ENCODE measurements at regions of chr4 and their contacts with region 1.

Region 1: GRCh38 chr4:157220371-157220881 is at the start of gene GRIA2:
- DNase-seq: peak; percentile 54
- ATAC-seq: peak; percentile 94
- H3K4me3 ChIP-seq: peak within 1 kb of the TSS; percentile 37
- H3K27ac ChIP-seq: no peak within 1 kb of the TSS
- H3K4me1 ChIP-seq: peaks cover 4% of the 10 kb centered on the region; the same call in 1 of the 2 replicates
- H3K27me3 ChIP-seq: peaks cover 33% of the 10 kb centered on the region
- CTCF ChIP-seq: no peak
- POLR2A ChIP-seq: no peak
- RAD21 ChIP-seq: no peak
- total RNA-seq, gene GRIA2: not detected in 2 replicates

Region 2: DNA sequence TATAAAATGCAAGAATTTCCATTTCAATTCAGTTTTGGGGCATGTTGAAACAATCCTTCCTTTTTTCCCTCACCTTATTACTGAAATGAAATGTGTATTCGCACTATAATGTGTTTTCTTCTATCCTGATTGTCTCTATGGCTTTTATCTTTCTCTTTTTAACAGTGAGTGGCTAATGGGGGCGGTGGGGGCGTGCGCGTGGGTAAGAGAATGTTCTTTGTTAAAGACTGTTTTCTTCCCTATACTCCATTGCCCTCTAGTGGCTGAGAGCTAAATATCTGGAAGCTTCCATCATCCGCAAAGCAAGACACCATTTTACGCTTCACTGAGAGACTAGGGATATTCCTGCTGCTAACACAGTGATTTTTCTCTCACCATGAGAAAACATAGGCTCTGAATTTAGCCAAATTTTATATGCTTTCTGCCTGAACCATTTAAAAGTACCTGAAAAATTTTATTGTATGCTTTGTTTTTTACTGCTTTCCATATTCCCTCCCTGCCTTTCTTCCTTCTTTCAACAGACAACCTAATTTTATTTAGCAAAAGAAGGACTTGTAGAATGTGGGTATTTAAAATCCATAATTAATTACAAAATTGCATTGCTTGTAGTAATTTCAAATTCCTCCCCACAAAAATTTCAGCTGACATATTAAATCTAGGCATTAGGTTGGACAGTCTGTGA is 758.4 kb after region 1 on chr4:
- CTCF ChIA-PET with region 1: interaction called, 3 read pairs
- POLR2A ChIA-PET with region 1: no interaction called
- dilution Hi-C with region 1: no loop called
- in situ Hi-C with region 1: no loop called
- intact Hi-C with region 1: loop called (anchors 1 kb)
- DNase-seq: peak; percentile 64
- ATAC-seq: peak; percentile 95
- H3K4me3 ChIP-seq: no peak overlapping the region; the same call in 1 of the 2 replicates
- H3K27ac ChIP-seq: no peak overlapping the region
- H3K4me1 ChIP-seq: no peaks in the 10 kb centered on the region
- H3K27me3 ChIP-seq: no peaks in the 10 kb centered on the region; the same call in 1 of the 2 replicates
- CTCF ChIP-seq: peak; percentile 78
- POLR2A ChIP-seq: no peak
- RAD21 ChIP-seq: peak; percentile 81

Region 3: GRCh38 chr4:158172261-158173258 is 952.1 kb after region 1 on chr4 and contains the start of gene GASK1B:
- CTCF ChIA-PET with region 1: no interaction called
- POLR2A ChIA-PET with region 1: no interaction called
- dilution Hi-C with region 1: no loop called
- in situ Hi-C with region 1: loop called (anchors 25 kb)
- intact Hi-C with region 1: loop called (anchors 5 kb)
- DNase-seq: peak; percentile 64
- ATAC-seq: peak; percentile 81
- H3K4me3 ChIP-seq: peak within 1 kb of the TSS; percentile 30
- H3K27ac ChIP-seq: peak within 1 kb of the TSS; percentile 71; the same call in 1 of the 2 replicates
- H3K4me1 ChIP-seq: peaks cover 17% of the 10 kb centered on the region
- H3K27me3 ChIP-seq: no peaks in the 10 kb centered on the region
- CTCF ChIP-seq: peak; percentile 81
- POLR2A ChIP-seq: no peak
- RAD21 ChIP-seq: peak; percentile 83
- total RNA-seq, gene GASK1B: 4.1 and 6.7 TPM in 2 replicates

Region 4: DNA sequence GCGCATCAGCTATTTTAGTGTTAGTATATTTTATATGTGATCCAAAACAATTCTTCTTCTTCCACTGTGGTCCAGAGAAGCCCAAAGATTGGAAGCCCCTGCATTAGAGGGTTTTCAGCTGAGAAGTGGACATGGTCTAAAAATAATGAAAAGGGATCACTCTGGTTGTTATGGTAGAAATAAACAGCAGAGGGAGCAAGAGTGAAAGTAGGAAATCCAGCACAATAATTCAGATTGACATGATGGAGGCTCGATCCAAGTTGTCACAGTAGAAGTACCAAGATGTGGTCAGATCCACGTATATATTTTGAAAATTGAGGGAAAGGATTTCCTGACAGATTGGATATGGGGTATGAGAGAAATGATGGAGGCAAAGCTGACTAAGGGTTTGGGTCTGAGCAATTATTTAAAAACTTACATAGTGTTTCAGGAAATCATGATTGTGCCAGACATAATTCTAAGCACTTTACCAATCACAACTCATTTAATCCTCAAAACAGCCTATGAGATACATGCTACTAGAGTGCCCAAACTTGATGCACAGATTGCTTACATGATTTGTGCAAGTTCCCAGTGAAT is 972.8 kb after region 1 on chr4:
- CTCF ChIA-PET with region 1: no interaction called
- POLR2A ChIA-PET with region 1: no interaction called
- dilution Hi-C with region 1: no loop called
- in situ Hi-C with region 1: loop called (anchors 25 kb)
- intact Hi-C with region 1: no loop called
- DNase-seq: peak; percentile 31
- ATAC-seq: peak; percentile 66; the same call in 1 of the 2 replicates
- H3K4me3 ChIP-seq: no peak overlapping the region
- H3K27ac ChIP-seq: no peak overlapping the region
- H3K4me1 ChIP-seq: no peaks in the 10 kb centered on the region
- H3K27me3 ChIP-seq: peaks cover 7% of the 10 kb centered on the region; the same call in 1 of the 2 replicates
- CTCF ChIP-seq: peak; percentile 61
- POLR2A ChIP-seq: no peak
- RAD21 ChIP-seq: peak; percentile 46